B cell (primary cell): ENCODE measurements at regions of chr4 and their contacts with region 1.

Region 1: DNA sequence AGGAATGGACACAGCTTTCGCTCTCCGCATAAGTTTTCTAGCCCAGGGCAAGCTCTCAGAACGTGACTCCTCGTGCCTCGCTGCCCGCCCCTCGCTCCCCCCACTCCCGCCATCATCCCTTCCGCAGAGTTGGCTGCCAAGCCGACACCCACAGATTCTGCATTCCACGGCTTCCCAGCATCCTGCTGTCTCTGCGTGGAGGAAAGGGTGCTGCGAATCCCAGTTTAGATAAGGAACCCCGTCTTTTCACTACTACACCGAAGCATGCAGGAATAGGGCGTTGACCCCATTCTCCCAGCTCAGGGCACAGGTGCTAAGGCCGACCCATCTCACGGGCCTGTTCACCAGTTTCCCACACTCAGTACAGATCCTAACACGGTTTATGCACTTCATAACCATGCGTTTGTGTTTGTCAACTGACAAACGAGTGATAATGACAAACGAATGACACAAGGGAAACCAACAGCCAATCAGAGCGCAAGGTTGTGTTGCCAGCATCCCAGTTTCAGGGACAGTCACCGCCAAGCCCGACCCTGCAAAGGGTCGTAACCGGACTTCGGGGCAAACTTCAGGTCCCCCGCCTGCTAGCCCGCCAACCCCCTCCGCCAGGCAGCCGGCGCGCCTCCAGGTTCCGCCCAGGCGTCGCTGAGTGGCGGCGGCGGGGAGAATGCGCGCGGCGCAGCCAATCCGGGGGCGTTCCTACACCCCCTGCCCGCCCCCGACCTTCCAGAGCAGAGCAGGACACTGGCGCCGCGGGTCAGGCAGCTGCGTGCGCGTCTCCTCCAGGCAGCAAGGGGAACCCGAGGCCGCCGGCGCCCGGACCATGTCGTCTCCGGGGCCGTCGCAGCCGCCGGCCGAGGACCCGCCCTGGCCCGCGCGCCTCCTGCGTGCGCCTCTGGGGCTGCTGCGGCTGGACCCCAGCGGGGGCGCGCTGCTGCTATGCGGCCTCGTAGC is at the start of gene CYP2U1:
- DNase-seq: peak; percentile 87
- ATAC-seq: peak; percentile 95
- H3K4me3 ChIP-seq: peak within 1 kb of the TSS; percentile 27 to 97 (median 80)
- H3K4me3 Mint-ChIP-seq: peak within 1 kb of the TSS; percentile 98
- H3K27ac ChIP-seq: peak within 1 kb of the TSS; percentile 72 to 75
- H3K27ac Mint-ChIP-seq: peak within 1 kb of the TSS; percentile 96
- H3K4me1 ChIP-seq: peaks cover 11 to 21% of the 10 kb centered on the region in 2 donors
- H3K4me1 Mint-ChIP-seq: peaks cover 44% of the 10 kb centered on the region
- H3K27me3 ChIP-seq: no peaks in the 10 kb centered on the region
- H3K27me3 Mint-ChIP-seq: no peaks in the 10 kb centered on the region
- CTCF ChIP-seq: no peak
- total RNA-seq, gene CYP2U1: 16.3 and 17.6 TPM in 2 replicates

Region 2: GRCh38 chr4:107719922-107720722 is 211.0 kb before region 1 on chr4 and contains the start of gene PAPSS1:
- CTCF ChIA-PET with region 1: interaction called, 3 read pairs
- POLR2A ChIA-PET with region 1: no interaction called
- intact Hi-C with region 1: loop called (anchors 1 kb)
- DNase-seq: peak; percentile 99
- ATAC-seq: peak; percentile 85
- H3K4me3 ChIP-seq: peak within 1 kb of the TSS; percentile 68 to 93 (median 90)
- H3K4me3 Mint-ChIP-seq: peak within 1 kb of the TSS; percentile 99
- H3K27ac ChIP-seq: peak within 1 kb of the TSS; percentile 50 to 75
- H3K27ac Mint-ChIP-seq: peak within 1 kb of the TSS; percentile 97
- H3K4me1 ChIP-seq: peaks cover 22 to 26% of the 10 kb centered on the region in 2 donors
- H3K4me1 Mint-ChIP-seq: peaks cover 39% of the 10 kb centered on the region
- H3K27me3 ChIP-seq: no peaks in the 10 kb centered on the region
- H3K27me3 Mint-ChIP-seq: no peaks in the 10 kb centered on the region
- CTCF ChIP-seq: no peak
- total RNA-seq, gene PAPSS1: 31.5 and 33.9 TPM in 2 replicates

Region 3: GRCh38 chr4:107913281-107913899 is 17.7 kb before region 1 on chr4:
- CTCF ChIA-PET with region 1: interaction called, 6 read pairs
- POLR2A ChIA-PET with region 1: no interaction called
- intact Hi-C with region 1: loop called (anchors 2 kb)
- DNase-seq: peak; percentile 69
- ATAC-seq: peak; percentile 70
- H3K4me3 ChIP-seq: no peak overlapping the region
- H3K4me3 Mint-ChIP-seq: no peak overlapping the region
- H3K27ac ChIP-seq: no peak overlapping the region
- H3K27ac Mint-ChIP-seq: no peak overlapping the region
- H3K4me1 ChIP-seq: no peaks in the 10 kb centered on the region
- H3K4me1 Mint-ChIP-seq: peaks cover 2% of the 10 kb centered on the region
- H3K27me3 ChIP-seq: no peaks in the 10 kb centered on the region
- H3K27me3 Mint-ChIP-seq: peaks cover 6% of the 10 kb centered on the region
- CTCF ChIP-seq: peak; percentile 91

Region 4: GRCh38 chr4:107989537-107990386 is 58.7 kb after region 1 on chr4 and contains the start of gene HADH:
- CTCF ChIA-PET with region 1: interaction called, 5 read pairs
- POLR2A ChIA-PET with region 1: interaction called, 5 read pairs
- intact Hi-C with region 1: loop called (anchors 1 kb)
- DNase-seq: peak; percentile 95
- ATAC-seq: peak; percentile 98
- H3K4me3 ChIP-seq: peak within 1 kb of the TSS; percentile 65 to 87 (median 71)
- H3K4me3 Mint-ChIP-seq: peak within 1 kb of the TSS; percentile 81
- H3K27ac ChIP-seq: peak within 1 kb of the TSS; percentile 38 to 82
- H3K27ac Mint-ChIP-seq: peak within 1 kb of the TSS; percentile 82
- H3K4me1 ChIP-seq: peaks cover 33 to 46% of the 10 kb centered on the region in 2 donors
- H3K4me1 Mint-ChIP-seq: peaks cover 48% of the 10 kb centered on the region
- H3K27me3 ChIP-seq: no peaks in the 10 kb centered on the region
- H3K27me3 Mint-ChIP-seq: no peaks in the 10 kb centered on the region
- CTCF ChIP-seq: no peak
- total RNA-seq, gene HADH: 26.1 and 26.4 TPM in 2 replicates

Region 5: DNA sequence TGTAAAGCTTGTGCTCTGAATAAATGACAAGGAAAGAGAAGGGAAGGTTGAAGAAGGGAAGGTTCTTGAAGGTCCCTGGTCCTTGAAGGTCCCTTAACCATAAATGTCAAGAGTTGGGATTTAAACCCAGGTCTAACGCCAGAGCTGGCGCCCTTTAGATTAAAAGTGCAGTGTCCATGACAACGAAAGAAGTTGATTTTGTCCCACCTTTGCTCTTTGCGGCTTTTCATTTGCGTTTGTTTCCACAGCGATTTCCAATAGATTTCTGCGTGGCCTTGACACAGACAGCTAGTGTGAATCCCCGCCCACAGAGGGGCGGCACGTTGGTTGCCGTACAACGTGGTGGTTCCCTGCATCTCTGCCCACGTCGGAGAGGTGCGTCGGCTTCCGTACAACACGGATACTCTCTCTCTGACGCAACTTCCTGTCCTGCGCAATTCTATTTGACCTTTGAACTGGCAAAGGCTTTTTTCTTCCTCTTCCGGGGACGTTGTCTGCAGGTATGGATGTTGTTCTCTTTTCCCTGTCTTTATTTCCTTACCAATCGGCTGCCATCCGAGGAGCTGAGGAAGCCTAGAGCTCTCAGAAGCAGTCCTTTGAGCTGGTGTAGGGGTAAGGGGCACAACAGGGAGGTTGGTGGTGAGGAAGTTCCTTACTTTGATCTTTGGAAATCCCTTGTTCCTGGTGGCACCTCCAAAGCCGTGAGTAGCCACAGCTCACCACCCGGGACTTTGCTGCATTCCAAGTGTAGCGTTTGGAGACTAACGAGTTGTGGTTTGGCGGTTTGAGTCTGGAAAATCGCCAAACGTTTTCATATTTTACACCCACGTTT is 689.2 kb after region 1 on chr4 and contains the start of gene RPL34:
- CTCF ChIA-PET with region 1: no interaction called
- POLR2A ChIA-PET with region 1: no interaction called
- intact Hi-C with region 1: loop called (anchors 1 kb)
- DNase-seq: peak; percentile 98
- ATAC-seq: peak; percentile 100
- H3K4me3 ChIP-seq: peak within 1 kb of the TSS; percentile 86 to 100 (median 98)
- H3K4me3 Mint-ChIP-seq: peak within 1 kb of the TSS; percentile 96
- H3K27ac ChIP-seq: peak within 1 kb of the TSS; percentile 87 to 88
- H3K27ac Mint-ChIP-seq: peak within 1 kb of the TSS; percentile 93
- H3K4me1 ChIP-seq: peaks cover 20 to 24% of the 10 kb centered on the region in 2 donors
- H3K4me1 Mint-ChIP-seq: peaks cover 44% of the 10 kb centered on the region
- H3K27me3 ChIP-seq: no peaks in the 10 kb centered on the region
- H3K27me3 Mint-ChIP-seq: no peaks in the 10 kb centered on the region
- CTCF ChIP-seq: no peak
- total RNA-seq, gene RPL34: 2,198 and 2,267 TPM in 2 replicates